Activated T-helper 2 cell treated with anti-CD3 and anti-CD28 coated beads, Interferon-gamma antibody, Interleukin-2, Interleukin-4, amounts not matched to agents 10 μg/mL and 5 μg/mL and 100 μg/mL, durations not matched to agents 14 hours and 24 hours and 36 hours (primary cell): ENCODE measurements at regions of chr10 and their contacts with region 1.

Region 1: DNA sequence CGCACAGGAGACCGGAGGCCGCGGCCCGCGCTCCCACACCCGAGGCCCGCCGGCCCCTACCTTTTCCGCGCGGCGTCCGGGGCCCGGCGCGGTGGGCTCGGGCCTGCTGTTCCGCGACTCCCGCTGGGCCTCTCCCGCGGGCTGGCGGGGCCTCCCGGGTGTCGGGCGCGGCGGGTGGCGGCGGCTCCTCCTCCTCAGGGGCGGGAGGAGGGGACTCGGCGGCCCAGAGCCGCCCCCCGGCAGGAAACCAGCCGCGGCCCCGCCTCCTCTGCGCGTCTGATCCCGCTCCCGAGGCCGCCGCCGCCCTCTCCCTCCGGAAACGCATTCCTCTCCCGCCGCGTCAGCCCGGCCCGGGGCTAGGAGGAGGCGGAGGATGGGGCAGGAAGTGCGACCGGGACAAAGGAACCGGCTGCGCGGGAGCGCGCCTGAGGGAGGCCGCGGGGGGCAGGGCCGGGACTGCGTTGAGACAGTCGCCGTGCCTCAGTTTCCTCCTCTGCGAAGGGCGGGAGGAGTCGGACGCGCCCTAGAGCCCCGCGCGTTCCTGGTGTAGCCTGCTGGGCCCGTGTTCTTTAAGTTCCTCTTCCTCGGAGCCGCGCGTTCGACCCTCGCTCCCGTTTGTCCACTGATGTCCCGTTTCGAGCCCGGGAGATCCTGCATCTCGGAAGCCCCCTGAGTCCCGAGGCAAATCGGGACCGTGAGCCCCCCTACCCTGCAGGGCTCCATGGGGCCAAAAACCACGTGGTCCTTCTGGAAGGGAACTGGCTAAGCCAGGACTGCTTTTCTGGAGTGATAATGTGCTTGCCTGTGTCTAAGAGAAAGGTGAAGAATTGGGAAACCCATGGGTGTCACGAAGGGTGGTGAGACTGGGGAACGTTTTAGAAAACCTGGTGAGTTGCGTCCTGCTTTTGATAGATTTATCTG is at the start of gene ITGB1:
- DNase-seq: peak; percentile 79
- H3K4me3 Mint-ChIP-seq: peak within 1 kb of the TSS; percentile 81
- H3K27ac Mint-ChIP-seq: peak within 1 kb of the TSS; percentile 90
- H3K4me1 Mint-ChIP-seq: peaks cover 45% of the 10 kb centered on the region
- H3K27me3 Mint-ChIP-seq: no peaks in the 10 kb centered on the region
- total RNA-seq, gene ITGB1: 77.8 and 78.7 TPM in 2 replicates

Region 2: DNA sequence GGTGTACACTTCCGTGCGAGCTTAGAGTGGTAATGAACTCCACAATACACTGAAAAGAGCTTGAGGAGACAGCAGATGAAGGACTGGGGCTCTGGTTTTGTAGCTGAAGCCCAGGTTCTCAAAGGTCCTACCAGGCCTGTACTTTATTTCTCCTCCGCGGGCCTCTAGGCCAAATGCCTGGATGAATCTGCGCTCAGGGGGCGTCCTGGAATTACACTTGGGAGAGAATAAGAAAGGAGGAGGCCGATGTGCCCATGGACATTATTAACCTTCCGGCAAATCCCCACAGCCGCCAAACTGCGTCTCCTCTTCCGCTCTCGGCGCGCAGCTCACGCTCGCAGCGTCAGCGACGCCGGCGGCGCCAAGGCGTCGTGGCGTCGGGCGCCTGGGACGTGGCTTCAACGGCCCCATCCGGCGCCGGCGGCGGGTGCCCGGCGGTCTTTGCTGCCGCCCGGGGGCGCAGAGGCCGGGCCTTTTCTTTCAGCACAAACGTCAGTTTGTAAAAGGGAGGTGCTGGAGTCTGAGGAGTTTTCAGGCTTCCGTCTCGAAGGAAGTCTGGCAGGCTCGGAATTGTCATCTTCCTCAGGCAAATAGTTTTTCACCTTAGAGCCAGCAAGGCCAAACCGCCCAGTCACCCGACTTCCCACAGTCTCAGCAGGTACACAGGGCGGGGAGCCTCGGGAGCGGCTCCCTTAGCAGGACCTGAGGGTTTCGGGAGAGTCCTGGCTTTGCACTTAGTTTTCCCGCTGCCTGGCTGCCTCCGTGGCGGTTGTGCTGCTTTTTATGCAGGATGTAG is 512.4 kb before region 1 on chr10 and contains the start of gene CCDC7:
- intact Hi-C with region 1: loop called (anchors 5 kb)
- DNase-seq: peak; percentile 82
- H3K4me3 Mint-ChIP-seq: peak within 1 kb of the TSS; percentile 90
- H3K27ac Mint-ChIP-seq: peak within 1 kb of the TSS; percentile 94
- H3K4me1 Mint-ChIP-seq: peaks cover 10% of the 10 kb centered on the region
- H3K27me3 Mint-ChIP-seq: peaks cover 2% of the 10 kb centered on the region
- total RNA-seq, gene CCDC7: 12.2 and 14.0 TPM in 2 replicates

Region 3: DNA sequence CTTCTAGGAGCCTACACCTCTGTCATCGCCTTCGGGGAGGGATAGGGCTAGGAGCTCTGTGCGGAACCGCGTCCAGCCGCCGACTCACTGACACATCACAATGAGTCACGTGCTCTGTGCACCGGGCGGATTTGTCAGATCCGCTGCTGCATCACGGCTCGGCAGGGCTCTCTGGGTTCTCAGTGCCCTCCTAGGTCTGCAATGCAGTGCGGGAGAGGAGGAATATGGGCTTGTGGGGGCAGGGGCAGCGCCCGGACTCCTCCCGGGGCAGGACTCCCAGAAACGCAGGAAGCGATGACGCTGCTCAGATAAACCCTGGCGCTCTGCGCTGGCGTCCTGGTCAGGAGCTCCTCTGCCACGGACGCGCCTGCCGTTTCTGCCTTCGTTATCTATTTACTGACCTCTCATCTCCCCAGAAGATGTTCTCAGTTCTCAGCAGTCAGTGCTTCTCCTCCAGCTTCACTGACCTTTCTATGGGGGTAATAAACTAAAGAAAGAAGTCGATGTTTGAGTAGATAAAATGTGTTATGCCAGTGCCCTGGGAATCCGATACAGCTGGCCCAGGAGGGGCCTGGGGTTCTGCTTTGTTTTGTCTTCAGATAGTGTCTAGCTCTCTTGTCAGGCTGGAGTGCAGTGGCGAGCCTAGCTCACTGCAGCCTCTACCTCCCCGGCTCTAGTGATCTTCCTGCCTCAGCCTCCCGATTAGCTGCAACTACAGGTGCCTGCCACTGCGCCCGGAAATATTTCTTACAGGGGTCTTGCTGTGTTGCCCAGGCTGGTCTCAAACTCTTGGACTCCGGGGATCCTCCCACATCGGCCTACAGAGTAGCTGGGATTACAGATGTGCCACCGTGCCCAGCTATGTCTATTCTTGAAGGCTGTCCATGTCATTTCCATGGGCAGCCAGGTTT is 22.5 kb after region 1 on chr10:
- intact Hi-C with region 1: loop called (anchors 1 kb)
- DNase-seq: peak; percentile 77
- H3K4me3 Mint-ChIP-seq: peak overlapping the region; percentile 85
- H3K27ac Mint-ChIP-seq: peak overlapping the region; percentile 88
- H3K4me1 Mint-ChIP-seq: peaks cover 28% of the 10 kb centered on the region
- H3K27me3 Mint-ChIP-seq: peaks cover 3% of the 10 kb centered on the region

Region 4: GRCh38 chr10:33134011-33134751 is 175.8 kb after region 1 on chr10:
- intact Hi-C with region 1: loop called (anchors 5 kb)
- DNase-seq: peak; percentile 64
- H3K4me3 Mint-ChIP-seq: peak overlapping the region; percentile 18
- H3K27ac Mint-ChIP-seq: peak overlapping the region; percentile 84
- H3K4me1 Mint-ChIP-seq: peaks cover 65% of the 10 kb centered on the region
- H3K27me3 Mint-ChIP-seq: no peaks in the 10 kb centered on the region